Lower leg skin (tissue), 4 donors: ENCODE measurements at regions of chr14 and their contacts with region 1.

Region 1: DNA sequence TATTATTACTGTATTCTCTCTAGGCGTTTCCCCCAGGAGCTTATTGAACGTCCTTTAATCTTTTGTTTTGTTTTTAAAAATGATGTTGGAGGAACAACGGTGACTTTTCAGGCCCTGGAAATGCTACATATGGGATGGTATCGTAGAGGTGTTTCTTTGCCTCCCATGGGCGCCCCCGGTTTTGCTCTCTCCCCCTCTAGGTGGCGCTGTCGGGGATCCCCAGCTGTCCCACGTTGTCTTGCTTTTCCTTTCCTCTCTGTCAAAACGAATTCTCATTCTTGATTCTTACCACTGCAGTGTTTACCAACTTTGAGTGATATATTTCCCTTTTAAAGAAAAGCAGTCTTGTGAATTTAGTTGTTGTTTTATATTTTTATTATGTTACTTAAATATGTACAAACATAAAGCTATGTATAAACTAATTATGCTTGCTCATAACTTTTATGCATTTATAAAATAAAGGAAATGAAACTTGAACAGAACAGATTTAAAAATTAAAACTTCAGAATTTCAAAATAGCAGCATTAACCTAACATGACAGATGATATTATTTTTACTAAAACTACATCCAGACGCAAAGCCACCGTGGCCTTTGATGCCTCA is 171.9 kb downstream of the RGS6 start:
- DNase-seq: no peak
- H3K4me3 ChIP-seq: no peak overlapping the region
- CTCF ChIP-seq: no peak
- POLR2A ChIP-seq: no peak

Region 2: DNA sequence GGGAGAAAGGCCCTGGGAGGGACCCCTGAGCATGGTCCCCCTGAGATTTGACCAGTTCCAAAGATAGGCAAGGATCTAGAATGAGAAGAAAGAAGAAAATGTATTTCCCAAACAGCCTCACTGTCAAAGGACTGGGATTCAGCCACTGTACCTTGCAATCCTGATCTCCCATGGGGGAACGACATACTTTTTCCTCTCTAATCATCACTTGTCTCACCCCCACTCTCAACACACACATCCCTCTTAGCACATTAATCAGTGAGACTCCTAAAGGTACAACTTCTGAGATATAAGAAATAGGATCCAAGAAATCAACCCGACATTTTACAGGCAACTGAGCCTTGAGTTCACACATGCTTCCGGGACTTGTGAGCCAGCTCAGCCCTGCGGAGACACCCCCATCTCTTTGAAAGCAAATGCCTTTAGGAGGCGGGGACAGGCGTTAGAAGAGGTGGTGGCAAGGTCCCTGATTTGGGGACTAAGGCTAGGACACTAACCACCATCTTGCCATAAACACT is 1296.2 kb before region 1 on chr14:
- intact Hi-C with region 1: no loop called
- DNase-seq: no peak
- H3K4me3 ChIP-seq: no peak overlapping the region
- CTCF ChIP-seq: no peak
- POLR2A ChIP-seq: no peak

Region 3: GRCh38 chr14:72084935-72085334 is 19.2 kb before region 1 on chr14:
- intact Hi-C with region 1: no loop called
- DNase-seq: no peak
- H3K4me3 ChIP-seq: no peak overlapping the region
- CTCF ChIP-seq: no peak
- POLR2A ChIP-seq: no peak

Region 4: DNA sequence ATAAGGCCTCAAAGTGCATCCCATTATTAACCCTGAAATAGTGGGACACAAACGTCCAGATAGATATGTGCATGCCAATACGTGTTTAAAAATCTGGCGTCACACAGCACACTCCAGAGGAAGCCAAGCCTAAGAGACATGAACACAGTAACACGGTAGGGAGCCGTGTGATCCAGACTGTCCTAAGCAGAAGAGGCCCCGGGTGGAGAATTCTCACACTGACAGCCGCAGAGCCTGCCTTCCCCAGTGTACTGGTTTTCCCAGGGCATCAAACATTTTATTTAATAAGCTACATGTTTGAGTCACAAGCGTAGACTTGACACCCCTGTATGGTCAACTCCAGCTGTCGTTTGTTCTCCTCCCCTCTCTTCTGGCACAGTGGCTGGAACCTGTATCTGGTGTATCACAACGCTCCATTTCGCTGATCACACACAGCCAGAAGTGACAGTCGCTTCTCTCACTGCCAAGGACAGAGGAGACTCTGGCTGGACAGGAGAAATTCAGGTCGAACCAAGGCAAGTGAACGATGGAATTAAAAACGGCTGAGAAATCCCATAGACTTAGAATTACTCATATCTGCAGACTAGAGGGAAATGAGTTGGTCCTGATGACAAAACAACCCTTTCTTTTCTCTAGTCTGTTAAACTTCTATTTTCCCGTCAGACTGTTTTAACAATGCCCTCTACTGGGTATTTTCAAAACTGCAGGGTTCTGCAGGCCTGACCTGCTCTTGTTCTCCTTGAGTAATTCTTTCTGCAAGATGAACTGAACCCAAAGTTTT is 188.0 kb after region 1 on chr14:
- intact Hi-C with region 1: loop called (anchors 5 kb)
- DNase-seq: peak in 1 of 2 donors; percentile 17
- H3K4me3 ChIP-seq: no peak overlapping the region
- CTCF ChIP-seq: no peak
- POLR2A ChIP-seq: no peak